ENCODE measurements at regions of chr10 and their contacts with region 1.

Region 1: DNA sequence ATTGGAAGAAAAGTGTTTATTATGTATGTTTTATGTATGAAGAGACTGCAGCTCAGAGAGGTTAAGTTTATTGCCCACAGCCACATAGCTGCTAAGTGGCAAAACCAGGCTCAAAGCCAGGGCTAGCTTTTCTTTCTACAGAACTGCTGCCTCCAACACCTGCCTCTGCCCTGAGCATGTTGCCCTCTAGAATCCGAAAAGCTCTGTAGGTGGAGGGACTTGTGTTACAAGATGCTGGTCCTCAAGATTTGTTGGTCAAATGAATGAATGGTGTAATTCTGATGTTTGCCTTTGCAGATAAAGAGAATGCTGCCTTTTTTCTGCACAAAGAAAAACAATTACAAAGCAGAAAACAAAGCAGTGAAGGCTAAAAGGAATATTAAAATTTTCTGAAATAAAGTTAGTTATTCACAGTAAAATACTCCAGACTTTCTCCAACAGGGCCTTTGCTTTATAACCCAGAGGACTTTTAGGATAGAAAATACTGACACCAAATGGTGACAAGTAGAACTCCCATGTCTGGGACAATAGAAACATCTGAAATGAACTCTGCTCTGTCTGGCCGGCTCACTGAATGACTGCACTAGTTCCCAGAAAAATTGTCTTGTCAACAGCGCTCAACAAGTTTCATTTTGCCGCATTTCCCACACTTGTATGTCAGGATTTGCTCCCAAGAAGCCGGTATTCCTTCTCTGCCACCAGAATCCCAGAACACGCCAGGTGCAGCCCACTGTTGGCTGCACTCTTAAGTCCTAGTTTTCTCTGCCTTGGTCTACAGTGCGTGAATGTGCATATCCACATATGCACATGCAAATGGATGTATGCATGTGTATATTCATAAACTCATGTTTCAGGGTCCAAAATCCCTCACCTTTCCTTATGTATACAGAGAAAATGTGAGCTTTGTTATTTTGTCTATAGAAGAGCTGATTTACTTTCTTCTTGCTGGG is 11.0 kb upstream of the DNTT start:
- DNase-seq: peak; percentile 49
- CTCF ChIP-seq: peak; percentile 63

Region 2: DNA sequence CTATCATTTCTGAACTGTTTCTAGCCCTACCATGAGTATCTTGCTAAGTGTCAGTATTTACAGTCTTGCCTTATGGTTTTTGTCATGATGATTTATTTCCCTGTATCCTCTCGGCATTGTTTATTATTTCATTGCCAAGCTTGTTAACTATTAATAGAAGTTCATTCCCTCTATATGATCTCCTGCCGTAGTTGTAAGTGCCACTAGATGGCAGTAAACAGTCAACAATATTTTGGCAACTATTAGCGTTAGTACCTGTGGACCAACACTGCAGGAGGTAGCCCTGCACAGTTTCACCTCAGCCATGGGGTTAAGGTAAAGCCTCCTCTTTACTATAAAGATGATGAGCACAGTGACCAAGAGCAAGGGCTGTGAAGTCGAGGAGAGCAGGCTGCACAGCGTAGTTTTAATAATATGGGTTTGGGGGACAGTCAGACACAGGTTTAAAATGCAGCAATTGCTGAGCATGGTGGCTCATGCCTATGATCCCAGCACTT is 276.0 kb before region 1 on chr10:
- CTCF ChIA-PET with region 1: interaction called, 33 read pairs
- POLR2A ChIA-PET with region 1: no interaction called
- DNase-seq: peak; percentile 67
- CTCF ChIP-seq: peak; percentile 78

Region 3: DNA sequence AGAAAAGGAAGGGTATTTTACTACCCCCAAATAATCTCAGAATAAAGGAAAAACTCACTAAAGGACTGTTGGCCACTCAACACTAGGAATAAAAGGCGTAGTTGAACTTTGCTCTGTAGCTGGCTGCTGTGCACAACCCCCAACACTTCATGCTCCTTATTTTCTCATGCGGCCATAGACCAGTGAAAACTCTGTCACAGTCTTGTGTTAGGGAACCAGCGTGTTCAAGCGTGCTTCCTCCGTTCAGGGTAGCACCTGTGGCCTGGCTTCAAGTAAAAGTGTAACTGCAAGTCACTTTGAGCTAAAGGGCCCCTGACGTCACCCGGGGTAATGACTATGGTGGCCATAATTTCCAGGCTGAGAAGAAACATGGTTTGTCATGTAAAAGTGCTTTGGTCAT is 48.9 kb before region 1 on chr10:
- CTCF ChIA-PET with region 1: interaction called, 548 read pairs
- POLR2A ChIA-PET with region 1: no interaction called
- DNase-seq: peak; percentile 72
- CTCF ChIP-seq: no peak

Region 4: DNA sequence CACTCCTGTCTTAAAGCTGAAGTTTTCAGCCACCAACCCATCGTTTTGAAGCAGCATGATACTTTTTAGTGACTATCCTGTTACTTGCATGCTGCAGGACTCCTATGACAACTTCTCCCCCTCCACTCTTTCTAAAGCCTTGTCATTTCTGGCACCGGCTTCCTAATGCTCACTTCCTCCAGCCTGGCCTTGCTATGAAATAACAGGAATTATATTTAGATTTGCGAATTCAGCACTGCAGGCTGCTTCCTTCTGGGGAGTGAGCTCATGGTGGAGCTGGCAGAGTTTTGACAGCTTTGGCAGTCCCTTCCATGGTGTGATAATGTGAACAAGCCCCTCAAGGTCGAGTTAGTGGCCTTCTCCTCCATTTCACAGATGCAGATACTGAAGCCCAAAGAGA is 35.3 kb before region 1 on chr10:
- CTCF ChIA-PET with region 1: interaction called, 12 read pairs
- POLR2A ChIA-PET with region 1: no interaction called
- DNase-seq: no peak
- CTCF ChIP-seq: no peak

Region 5: DNA sequence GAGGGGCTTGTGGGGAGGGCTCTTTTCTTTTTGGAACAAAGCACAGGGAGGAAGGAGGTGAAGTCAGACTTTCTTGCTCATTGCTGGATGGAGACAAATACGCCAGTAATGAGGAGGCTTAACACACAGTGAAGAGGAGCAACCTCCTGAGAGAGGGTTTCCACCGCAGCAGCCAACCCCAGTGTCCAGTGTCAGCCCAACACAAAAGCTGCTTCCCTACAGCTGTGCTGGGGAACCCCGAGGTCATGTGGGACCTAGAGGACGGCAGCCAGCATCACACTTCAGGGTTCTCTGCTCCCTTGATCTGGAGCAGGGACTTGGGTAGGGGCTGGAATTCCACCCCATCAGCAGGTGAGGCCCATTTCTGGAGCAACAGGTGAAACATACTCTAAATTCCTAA is 29.6 kb before region 1 on chr10:
- CTCF ChIA-PET with region 1: interaction called, 41 read pairs
- POLR2A ChIA-PET with region 1: interaction called, 6 read pairs
- DNase-seq: no peak
- CTCF ChIP-seq: no peak

Region 6: DNA sequence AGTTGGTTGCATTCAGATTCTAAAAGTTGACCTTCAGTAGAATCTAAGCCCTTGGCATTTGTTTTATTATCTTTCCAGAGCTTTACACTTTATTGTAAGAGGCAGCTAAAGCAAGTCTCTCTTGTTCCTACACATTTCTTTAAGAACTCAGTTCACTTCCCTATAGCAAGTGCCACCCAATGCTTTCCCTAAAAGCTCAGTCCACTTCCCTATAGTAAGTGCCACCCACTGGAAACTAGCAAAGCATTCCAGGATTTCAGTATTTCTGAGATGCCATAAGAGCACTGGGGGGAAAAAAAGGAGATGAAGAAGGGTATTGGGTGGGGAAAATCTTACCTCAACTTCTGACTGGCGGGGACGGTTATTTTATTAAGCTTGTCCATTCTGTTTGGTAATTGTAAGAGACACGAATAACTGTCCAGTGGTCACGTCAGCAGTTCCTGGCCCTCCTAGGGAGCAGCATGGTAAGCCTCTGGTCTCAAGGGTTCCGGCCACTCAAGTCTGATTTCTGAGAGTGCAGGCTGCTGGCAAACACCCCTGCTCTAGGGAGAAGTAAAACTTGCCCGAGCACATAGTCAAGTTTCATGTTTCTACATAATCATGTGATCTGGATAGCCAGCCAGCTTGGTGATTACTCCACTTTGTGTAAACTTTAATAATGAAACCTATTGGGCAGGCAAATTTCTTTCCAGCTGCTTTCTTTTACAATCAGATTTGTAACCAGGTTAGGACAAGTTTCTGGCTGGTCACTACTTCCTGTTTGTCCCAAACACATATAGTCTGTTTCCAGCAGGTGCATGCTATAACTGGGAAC is 22.0 kb before region 1 on chr10 and contains the start of gene BLNK:
- CTCF ChIA-PET with region 1: interaction called, 41 read pairs
- POLR2A ChIA-PET with region 1: interaction called, 6 read pairs
- DNase-seq: peak; percentile 76
- CTCF ChIP-seq: no peak

Region 7: DNA sequence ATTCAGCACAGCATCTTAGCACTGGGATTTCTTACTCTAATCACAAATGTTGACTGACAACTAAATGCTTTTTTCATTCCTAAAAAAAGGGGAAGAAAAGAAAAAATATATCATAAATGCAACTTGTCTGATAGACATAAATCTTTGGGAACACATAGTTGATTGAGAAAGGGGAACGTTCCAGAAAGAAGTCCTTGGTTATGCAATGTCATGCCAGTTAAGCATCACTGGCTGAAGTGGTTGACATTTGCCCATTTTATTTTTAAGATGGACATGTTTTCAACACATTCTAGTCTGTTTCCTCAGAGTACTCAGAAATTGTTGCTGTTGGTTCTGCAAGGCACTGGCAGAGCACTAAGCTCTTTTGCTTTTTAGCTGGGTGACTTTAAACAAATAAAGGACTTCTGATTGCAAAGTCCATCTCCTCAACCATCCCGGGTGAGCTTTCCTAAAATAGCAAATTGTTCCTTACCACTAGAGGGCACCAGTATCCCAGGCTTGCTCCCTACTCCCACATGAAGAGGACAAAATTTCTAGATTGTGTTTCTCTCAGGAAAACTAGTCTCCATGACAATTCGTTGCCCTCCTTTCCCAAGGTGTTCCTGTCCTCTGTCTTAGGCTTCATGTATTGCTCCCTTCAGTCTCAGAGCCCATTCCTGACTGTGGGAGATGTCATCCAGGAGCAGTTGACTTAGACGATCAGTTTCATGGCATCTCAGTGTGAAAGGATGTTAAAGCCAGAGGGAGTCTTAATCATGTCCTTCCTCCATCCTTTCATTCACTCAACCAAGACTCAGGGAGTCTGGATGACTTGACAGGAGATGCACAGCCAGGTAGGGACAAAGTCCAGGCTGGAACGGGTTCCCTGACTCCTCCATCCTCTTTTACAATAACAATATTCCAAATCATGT is 41.6 kb after region 1 on chr10:
- CTCF ChIA-PET with region 1: interaction called, 10 read pairs
- POLR2A ChIA-PET with region 1: no interaction called
- DNase-seq: peak; percentile 19
- CTCF ChIP-seq: peak; percentile 59